GM10248 (cell line): ENCODE measurements at regions of chrX and their contacts with region 1.

Region 1: DNA sequence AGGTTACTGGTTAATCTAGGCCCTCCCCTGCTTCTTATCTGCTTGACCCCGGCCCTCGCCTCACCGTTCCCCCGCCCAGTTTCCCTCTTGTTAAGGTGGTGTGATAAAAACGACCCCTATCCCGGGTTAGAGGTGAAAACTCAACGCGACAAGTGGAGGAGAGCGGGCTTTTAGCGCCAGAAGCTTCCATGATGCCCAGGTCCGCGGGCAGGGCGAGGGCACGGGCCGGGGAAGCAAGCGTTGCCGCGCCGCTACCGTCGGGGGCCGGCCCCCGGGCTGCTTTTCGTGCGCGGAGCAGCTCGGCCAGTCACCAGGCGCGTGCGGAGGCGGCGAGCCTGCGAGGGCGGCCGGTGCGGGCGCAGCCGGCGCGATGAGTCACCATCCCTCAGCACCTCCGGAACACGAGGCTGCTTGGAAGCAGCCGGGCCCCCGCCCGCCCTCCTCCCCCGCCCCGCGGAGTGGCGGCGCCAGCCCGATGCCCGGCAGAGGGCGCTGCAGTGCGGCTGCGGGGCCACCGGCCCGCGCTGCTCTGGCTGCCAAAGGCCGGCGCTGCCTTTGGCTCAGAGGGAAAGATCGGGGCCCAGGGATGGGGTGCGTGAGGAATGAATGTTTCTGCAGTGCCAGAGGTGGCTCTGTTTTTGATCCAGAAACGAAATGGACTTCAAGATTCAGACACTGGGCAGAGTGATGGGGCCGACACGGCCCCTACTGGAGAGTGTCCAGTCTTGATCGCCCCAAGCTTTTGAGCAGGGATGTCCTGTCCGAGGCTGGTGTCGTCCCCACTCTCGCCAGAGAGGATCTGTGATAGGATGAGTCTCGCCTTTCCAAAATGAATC is 107.8 kb downstream of the NHSL2 start:
- DNase-seq: peak; percentile 78
- CTCF ChIP-seq: peak; percentile 57

Region 2: GRCh38 chrX:71906144-71906543 is 112.4 kb before region 1 on chrX:
- CTCF ChIA-PET with region 1: no interaction called
- POLR2A ChIA-PET with region 1: no interaction called
- DNase-seq: no peak
- CTCF ChIP-seq: no peak

Region 3: GRCh38 chrX:71998836-71999509 is 19.5 kb before region 1 on chrX:
- CTCF ChIA-PET with region 1: interaction called, 10 read pairs
- POLR2A ChIA-PET with region 1: no interaction called
- DNase-seq: peak; percentile 40
- CTCF ChIP-seq: peak; percentile 47

Region 4: DNA sequence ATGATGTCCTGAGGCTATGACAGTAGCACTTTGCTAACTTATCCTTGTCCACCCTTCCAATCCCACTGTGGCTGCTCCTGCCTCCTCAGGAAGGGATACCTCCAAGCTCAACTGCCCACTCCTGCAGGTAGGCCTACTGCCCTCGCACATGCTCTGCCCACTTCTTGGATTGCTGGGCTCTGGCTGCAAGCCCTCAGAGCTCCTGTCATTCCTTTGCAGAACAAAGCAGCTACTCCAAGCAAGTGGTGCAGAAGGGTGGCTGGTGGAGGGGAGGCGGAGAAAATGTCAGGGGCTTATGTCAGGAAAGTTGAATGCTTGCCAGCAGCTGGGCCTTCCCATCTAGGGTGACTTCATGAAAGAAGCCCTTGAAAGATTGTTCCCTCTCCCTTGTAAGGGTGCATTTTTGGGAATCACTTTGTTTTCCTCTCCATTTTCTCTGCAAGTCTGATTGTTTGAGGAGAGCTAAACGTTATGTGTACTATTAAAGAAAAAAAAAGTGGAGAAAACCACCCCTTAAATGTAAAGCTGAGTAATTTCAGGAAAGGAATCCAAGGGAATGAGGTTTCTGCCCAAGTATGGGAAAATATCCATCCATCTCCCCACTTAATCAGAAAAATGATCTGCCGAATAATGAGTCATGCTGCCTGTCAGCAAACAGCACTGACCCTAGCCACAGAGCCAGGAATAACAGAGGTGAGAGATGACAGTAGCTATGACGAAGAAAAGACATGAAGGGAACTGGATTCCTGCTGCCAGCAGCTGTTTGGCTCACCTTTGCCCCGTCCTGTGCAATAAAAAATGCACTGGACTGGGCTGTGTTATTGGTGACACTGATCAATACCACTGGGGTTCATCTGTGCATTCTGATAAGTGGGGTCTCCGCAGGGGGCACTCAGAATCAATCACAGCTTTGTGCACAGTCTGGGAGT is 11.3 kb after region 1 on chrX:
- CTCF ChIA-PET with region 1: interaction called, 14 read pairs
- POLR2A ChIA-PET with region 1: no interaction called
- DNase-seq: no peak
- CTCF ChIP-seq: no peak